Activated T-helper 2 cell treated with anti-CD3 and anti-CD28 coated beads, Interferon-gamma antibody, Interleukin-2, Interleukin-4, amounts not matched to agents 10 μg/mL and 5 μg/mL and 100 μg/mL, durations not matched to agents 14 hours and 24 hours and 36 hours (primary cell): ENCODE measurements at regions of chr7 and their contacts with region 1.

Region 1: GRCh38 chr7:131188367-131189339 is 139.0 kb upstream of the MKLN1 start:
- DNase-seq: peak; percentile 56
- H3K4me3 Mint-ChIP-seq: peak overlapping the region; percentile 42
- H3K27ac Mint-ChIP-seq: peak overlapping the region; percentile 89
- H3K4me1 Mint-ChIP-seq: peaks cover 59% of the 10 kb centered on the region
- H3K27me3 Mint-ChIP-seq: no peaks in the 10 kb centered on the region

Region 2: DNA sequence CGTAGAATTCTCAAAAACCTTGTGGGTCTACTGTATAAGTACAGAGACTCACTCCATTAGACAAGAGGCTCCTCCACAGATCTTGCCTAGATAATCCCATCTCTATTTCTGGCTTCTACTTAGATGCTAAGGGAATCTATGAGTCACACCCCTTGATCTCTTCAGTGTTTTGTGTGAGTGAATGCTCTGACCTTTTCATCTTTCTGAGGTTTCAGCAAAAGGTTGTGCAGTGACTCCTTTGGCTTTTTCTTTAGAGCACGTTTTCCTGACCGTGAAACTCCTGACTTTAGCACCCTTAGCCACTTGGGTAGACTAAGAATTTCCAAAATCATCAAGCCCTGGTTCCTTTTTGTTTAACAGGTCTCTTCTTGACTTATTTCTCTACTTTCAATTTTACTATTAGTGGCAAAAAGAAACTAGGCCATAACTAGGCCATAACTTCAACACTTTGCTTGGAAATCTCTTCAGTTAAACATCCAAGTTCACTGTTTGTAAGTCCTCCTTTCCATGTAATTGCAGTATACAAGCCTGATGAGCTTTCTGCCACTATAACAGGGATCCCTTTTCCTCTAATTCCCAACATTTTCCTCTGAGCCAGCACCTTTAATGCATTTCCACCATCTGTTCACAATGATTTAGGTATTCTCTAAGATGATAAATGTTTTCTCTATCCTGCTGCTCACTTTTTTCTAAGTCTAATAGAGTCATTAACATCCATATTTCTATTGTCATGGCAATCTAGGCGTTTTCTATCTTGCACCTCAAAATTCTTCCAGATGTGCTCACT is 539.5 kb before region 1 on chr7:
- intact Hi-C with region 1: loop called (anchors 2 kb)
- DNase-seq: no peak
- H3K4me3 Mint-ChIP-seq: peak overlapping the region; percentile 30
- H3K27ac Mint-ChIP-seq: peak overlapping the region; percentile 89
- H3K4me1 Mint-ChIP-seq: peaks cover 37% of the 10 kb centered on the region
- H3K27me3 Mint-ChIP-seq: no peaks in the 10 kb centered on the region

Region 3: DNA sequence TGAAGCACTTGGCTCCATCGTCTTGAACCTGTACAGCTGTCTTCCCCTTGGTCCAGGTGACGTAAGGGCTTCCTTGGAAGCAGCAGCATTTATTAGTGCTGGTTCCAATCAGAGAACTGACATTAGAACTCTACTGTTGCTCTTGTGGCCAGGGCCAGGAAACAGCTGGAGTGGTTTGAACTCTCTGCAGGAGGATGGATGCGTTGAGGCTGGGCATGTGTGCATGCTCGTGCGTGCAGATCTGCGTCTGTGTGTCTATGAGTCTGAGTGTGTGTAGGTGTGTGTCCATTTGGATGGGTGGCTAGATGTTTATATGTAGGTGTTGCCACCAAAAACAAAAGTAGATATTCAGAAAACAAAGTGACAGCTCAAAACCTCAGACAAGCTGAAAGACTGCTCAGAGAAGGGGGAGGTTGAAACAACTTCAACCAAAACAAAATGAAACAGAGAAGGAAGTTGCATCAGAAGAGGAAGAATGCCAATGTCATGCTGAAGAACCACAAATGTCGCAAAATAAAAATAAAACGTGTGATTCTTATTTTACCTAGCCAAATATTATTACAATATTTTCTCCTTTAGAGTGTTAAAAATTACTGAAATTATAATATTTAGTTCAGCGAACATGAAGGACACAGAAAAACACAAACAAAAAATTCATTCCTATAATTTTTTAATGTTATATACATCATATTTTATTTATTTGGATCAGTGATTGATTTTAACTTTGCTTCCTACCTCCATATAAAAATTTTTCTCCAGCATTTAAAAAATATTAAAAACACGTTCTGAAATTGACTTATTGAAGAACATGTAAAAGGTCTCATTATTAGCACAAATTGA is 42.9 kb after region 1 on chr7:
- intact Hi-C with region 1: loop called (anchors 1 kb)
- DNase-seq: peak; percentile 63
- H3K4me3 Mint-ChIP-seq: peak overlapping the region; percentile 59
- H3K27ac Mint-ChIP-seq: peak overlapping the region; percentile 83
- H3K4me1 Mint-ChIP-seq: peaks cover 58% of the 10 kb centered on the region
- H3K27me3 Mint-ChIP-seq: no peaks in the 10 kb centered on the region

Region 4: GRCh38 chr7:131327626-131328376 is 139.1 kb after region 1 on chr7 and contains the start of gene MKLN1:
- intact Hi-C with region 1: loop called (anchors 1 kb)
- DNase-seq: peak; percentile 85
- H3K4me3 Mint-ChIP-seq: peak within 1 kb of the TSS; percentile 94
- H3K27ac Mint-ChIP-seq: peak within 1 kb of the TSS; percentile 95
- H3K4me1 Mint-ChIP-seq: peaks cover 48% of the 10 kb centered on the region
- H3K27me3 Mint-ChIP-seq: no peaks in the 10 kb centered on the region
- total RNA-seq, gene MKLN1: 38.3 and 40.9 TPM in 2 replicates

Region 5: GRCh38 chr7:131365838-131366237 is 177.2 kb after region 1 on chr7:
- intact Hi-C with region 1: loop called (anchors 1 kb)
- DNase-seq: no peak
- H3K4me3 Mint-ChIP-seq: no peak overlapping the region
- H3K27ac Mint-ChIP-seq: no peak overlapping the region
- H3K4me1 Mint-ChIP-seq: peaks cover 69% of the 10 kb centered on the region
- H3K27me3 Mint-ChIP-seq: no peaks in the 10 kb centered on the region

Region 6: DNA sequence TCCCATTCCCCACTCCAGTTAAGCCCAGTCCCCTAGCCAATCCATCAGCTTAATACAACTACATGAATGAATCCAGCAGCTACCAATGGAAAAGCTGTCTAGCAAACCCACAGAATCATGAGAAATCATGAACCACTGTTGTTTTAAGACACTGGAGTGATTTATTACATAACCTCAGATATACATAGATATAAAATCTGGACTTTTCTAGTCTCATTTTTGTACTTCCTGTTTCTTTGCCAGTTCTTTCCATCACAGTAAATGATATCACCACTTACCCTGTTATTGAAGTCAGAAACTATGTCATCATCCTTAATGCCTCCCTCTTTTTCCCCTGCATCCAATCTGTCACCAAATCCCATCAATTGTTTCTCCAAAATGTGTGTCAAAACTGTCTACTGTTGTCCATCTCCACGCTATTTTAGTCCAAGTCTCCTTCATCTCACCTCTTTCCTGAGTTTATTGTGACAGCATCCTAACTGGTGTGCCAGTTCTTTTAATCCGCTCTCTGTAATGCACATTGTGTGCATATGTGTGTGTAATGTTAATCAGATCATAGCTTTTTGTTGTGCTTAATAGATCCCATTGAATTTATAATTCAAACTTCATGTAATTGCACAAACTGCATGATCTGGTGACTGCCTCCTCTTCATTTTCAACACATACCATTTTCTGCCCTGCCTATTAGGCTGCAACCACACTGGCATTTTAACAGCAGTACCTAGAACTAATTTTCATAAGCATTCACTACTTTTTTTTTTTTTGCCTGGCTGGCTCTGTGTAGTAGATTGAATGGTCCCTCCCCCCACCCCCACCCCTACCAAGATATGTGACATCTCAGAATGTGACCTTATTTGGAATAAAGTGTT is 195.0 kb after region 1 on chr7:
- intact Hi-C with region 1: loop called (anchors 5 kb)
- DNase-seq: no peak
- H3K4me3 Mint-ChIP-seq: no peak overlapping the region
- H3K27ac Mint-ChIP-seq: peak overlapping the region; percentile 4
- H3K4me1 Mint-ChIP-seq: peaks cover 23% of the 10 kb centered on the region
- H3K27me3 Mint-ChIP-seq: no peaks in the 10 kb centered on the region

Region 7: GRCh38 chr7:131507592-131508331 is 319.1 kb after region 1 on chr7:
- intact Hi-C with region 1: loop called (anchors 10 kb)
- DNase-seq: peak; percentile 67
- H3K4me3 Mint-ChIP-seq: no peak overlapping the region
- H3K27ac Mint-ChIP-seq: no peak overlapping the region
- H3K4me1 Mint-ChIP-seq: peaks cover 17% of the 10 kb centered on the region
- H3K27me3 Mint-ChIP-seq: peaks cover 3% of the 10 kb centered on the region